Naive thymus-derived CD4-positive, alpha-beta T cell (primary cell): ENCODE measurements at regions of chr16 and their contacts with region 1.

Region 1: DNA sequence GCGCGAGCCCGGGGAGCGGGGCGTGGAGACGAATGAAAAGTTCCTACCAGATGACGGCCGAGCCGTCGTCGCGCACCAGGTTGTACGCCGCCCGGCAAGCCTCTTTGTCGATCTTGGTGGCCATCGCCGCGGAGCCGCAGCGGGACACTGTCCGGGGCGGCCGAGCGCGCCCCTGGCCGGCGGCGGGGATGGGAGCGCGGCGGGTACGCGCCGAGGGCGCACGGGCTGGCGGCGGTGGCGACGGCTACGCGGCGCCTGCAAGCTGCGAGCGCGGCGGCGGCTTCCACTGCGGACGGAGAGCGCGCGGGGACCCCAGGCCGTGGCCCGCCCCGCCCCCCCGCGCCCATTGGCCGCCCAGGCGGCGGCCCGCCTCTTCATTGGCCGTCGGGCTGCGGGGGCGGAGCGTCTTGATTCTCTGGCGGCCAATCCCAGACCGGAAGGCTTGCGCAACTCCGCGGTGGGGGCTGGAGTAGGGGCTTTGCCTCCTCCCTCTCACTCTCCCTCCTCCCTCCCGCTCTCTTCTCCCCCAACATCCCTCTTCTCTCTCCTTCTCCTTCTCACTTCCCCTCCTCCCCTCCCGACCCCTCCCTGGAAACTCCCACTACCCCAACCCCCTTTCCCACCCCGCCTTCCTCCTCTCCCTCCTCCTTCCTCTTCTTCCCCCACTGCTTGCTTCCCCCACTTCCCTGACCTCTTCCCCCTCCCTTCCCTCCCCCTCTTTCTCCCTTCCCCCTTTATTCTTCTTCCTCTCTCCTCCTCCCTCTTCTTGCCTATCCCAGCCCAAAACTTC is at the start of gene COTL1:
- DNase-seq: peak; percentile 86 to 96 (median 90)
- ATAC-seq: peak; percentile 94
- H3K4me3 ChIP-seq: peak within 1 kb of the TSS; percentile 70
- H3K4me3 Mint-ChIP-seq: peak within 1 kb of the TSS; percentile 95 to 99 (median 97)
- H3K27ac ChIP-seq: peak within 1 kb of the TSS; percentile 68
- H3K27ac Mint-ChIP-seq: peak within 1 kb of the TSS; percentile 82 to 95 (median 91)
- H3K4me1 ChIP-seq: peaks cover 32 to 39% of the 10 kb centered on the region in 2 donors
- H3K4me1 Mint-ChIP-seq: peaks cover 33 to 64% (median 53%) of the 10 kb centered on the region in 7 donors
- H3K27me3 ChIP-seq: no peaks in the 10 kb centered on the region
- H3K27me3 Mint-ChIP-seq: peaks cover 0 to 14% (median 0%) of the 10 kb centered on the region in 5 donors
- total RNA-seq, gene COTL1: 84.2 to 704 (median 172) TPM

Region 2: GRCh38 chr16:84511180-84511824 is 106.7 kb before region 1 on chr16:
- CTCF ChIA-PET with region 1: interaction called, 129 read pairs
- POLR2A ChIA-PET with region 1: interaction called, 96 read pairs
- intact Hi-C with region 1: loop called (anchors 1 kb)
- DNase-seq: peak; percentile 55 to 88 (median 79)
- ATAC-seq: peak; percentile 62
- H3K4me3 ChIP-seq: no peak overlapping the region
- H3K4me3 Mint-ChIP-seq: peak overlapping the region in 9 of 10 donors; percentile 11 to 71 (median 62)
- H3K27ac ChIP-seq: no peak overlapping the region
- H3K27ac Mint-ChIP-seq: peak overlapping the region; percentile 55 to 94 (median 82)
- H3K4me1 ChIP-seq: peaks cover 53 to 77% of the 10 kb centered on the region in 2 donors
- H3K4me1 Mint-ChIP-seq: peaks cover 48 to 79% (median 74%) of the 10 kb centered on the region in 7 donors
- H3K27me3 ChIP-seq: no peaks in the 10 kb centered on the region
- H3K27me3 Mint-ChIP-seq: no peaks in the 10 kb centered on the region

Region 3: GRCh38 chr16:84593825-84594724 is 23.9 kb before region 1 on chr16:
- CTCF ChIA-PET with region 1: interaction called, 20 read pairs
- POLR2A ChIA-PET with region 1: interaction called, 79 read pairs
- intact Hi-C with region 1: loop called in 1 of 2 experiments (anchors 1 kb)
- DNase-seq: peak; percentile 47 to 82 (median 73)
- ATAC-seq: peak; percentile 92
- H3K4me3 ChIP-seq: peak overlapping the region; percentile 41
- H3K4me3 Mint-ChIP-seq: peak overlapping the region; percentile 67 to 85 (median 79)
- H3K27ac ChIP-seq: peak overlapping the region; percentile 73
- H3K27ac Mint-ChIP-seq: peak overlapping the region; percentile 88 to 98 (median 96)
- H3K4me1 ChIP-seq: peaks cover 53 to 60% of the 10 kb centered on the region in 2 donors
- H3K4me1 Mint-ChIP-seq: peaks cover 46 to 75% (median 64%) of the 10 kb centered on the region in 7 donors
- H3K27me3 ChIP-seq: no peaks in the 10 kb centered on the region
- H3K27me3 Mint-ChIP-seq: peaks cover 0 to 4% (median 0%) of the 10 kb centered on the region in 5 donors

Region 4: GRCh38 chr16:84647828-84648594 is 30.0 kb after region 1 on chr16 and contains the start of gene KLHL36:
- CTCF ChIA-PET with region 1: interaction called, 11 read pairs
- POLR2A ChIA-PET with region 1: interaction called, 4 read pairs
- intact Hi-C with region 1: loop called in 1 of 2 experiments (anchors 2 kb)
- DNase-seq: peak; percentile 59 to 89 (median 70)
- ATAC-seq: peak; percentile 92
- H3K4me3 ChIP-seq: peak within 1 kb of the TSS; percentile 73
- H3K4me3 Mint-ChIP-seq: peak within 1 kb of the TSS; percentile 86 to 98 (median 93)
- H3K27ac ChIP-seq: peak within 1 kb of the TSS; percentile 81
- H3K27ac Mint-ChIP-seq: peak within 1 kb of the TSS; percentile 85 to 99 (median 92)
- H3K4me1 ChIP-seq: peaks cover 19 to 41% of the 10 kb centered on the region in 2 donors
- H3K4me1 Mint-ChIP-seq: peaks cover 38 to 54% (median 49%) of the 10 kb centered on the region in 7 donors
- H3K27me3 ChIP-seq: no peaks in the 10 kb centered on the region
- H3K27me3 Mint-ChIP-seq: peaks cover 0 to 35% (median 0%) of the 10 kb centered on the region in 5 donors
- total RNA-seq, gene KLHL36: 51.8 to 161 (median 97.8) TPM

Region 5: GRCh38 chr16:84726079-84726668 is 108.2 kb after region 1 on chr16:
- CTCF ChIA-PET with region 1: interaction called, 78 read pairs
- POLR2A ChIA-PET with region 1: interaction called, 3 read pairs
- intact Hi-C with region 1: loop called (anchors 1 kb)
- DNase-seq: peak; percentile 61 to 83 (median 74)
- ATAC-seq: peak; percentile 92
- H3K4me3 ChIP-seq: no peak overlapping the region
- H3K4me3 Mint-ChIP-seq: peak overlapping the region in 8 of 10 donors; percentile 54 to 76 (median 60)
- H3K27ac ChIP-seq: no peak overlapping the region
- H3K27ac Mint-ChIP-seq: peak overlapping the region in 4 of 9 donors; percentile 6 to 41 (median 31)
- H3K4me1 ChIP-seq: peaks cover 8 to 26% of the 10 kb centered on the region in 2 donors
- H3K4me1 Mint-ChIP-seq: peaks cover 55 to 83% (median 69%) of the 10 kb centered on the region in 7 donors
- H3K27me3 ChIP-seq: no peaks in the 10 kb centered on the region
- H3K27me3 Mint-ChIP-seq: no peaks in the 10 kb centered on the region

Region 6: GRCh38 chr16:84970447-84971127 is 352.6 kb after region 1 on chr16:
- CTCF ChIA-PET with region 1: no interaction called
- POLR2A ChIA-PET with region 1: no interaction called
- intact Hi-C with region 1: loop called (anchors 1 to 2 kb)
- DNase-seq: peak; percentile 60 to 79 (median 74)
- ATAC-seq: peak; percentile 92
- H3K4me3 ChIP-seq: no peak overlapping the region
- H3K4me3 Mint-ChIP-seq: no peak overlapping the region
- H3K27ac ChIP-seq: no peak overlapping the region
- H3K27ac Mint-ChIP-seq: peak overlapping the region in 3 of 9 donors; percentile 9 to 78 (median 46)
- H3K4me1 ChIP-seq: peaks cover 0 to 6% of the 10 kb centered on the region in 2 donors
- H3K4me1 Mint-ChIP-seq: peaks cover 0 to 8% (median 4%) of the 10 kb centered on the region in 7 donors
- H3K27me3 ChIP-seq: no peaks in the 10 kb centered on the region
- H3K27me3 Mint-ChIP-seq: no peaks in the 10 kb centered on the region